ENCODE measurements at regions of chr1 and their contacts with region 1.

Region 1: DNA sequence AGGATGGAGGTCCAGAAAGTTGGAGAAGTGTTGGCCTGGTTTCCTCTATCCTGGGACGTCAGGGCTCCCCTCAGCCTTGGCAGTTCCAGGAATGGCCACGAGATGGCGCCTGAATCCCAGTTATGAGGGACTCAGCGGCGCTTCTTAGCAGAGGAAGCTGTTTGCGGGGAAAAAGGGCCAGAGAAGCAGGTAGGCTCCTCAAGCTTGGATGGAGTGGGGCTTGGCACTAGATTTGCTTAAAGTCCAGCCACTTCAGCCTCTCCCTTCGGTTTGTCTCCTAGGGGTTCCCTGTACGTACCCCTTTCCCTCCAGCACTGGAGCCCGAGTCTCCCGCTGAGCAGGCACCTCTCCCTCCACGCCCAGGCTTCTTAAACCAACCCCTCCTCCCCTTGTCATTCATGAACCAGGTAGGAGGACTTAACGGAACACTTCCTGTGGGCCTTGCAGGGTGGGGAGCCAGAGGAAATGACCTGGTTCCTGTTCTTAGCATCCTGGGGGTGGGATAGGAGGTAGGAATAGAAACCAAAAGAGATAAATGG is 32.0 kb upstream of the TENT5B start:
- DNase-seq: peak; percentile 77
- H3K4me3 ChIP-seq: no peak overlapping the region
- H3K27ac ChIP-seq: no peak overlapping the region
- H3K4me1 ChIP-seq: peaks cover 5% of the 10 kb centered on the region
- H3K27me3 ChIP-seq: no peaks in the 10 kb centered on the region
- CTCF ChIP-seq: peak; percentile 95 to 96
- POLR2A ChIP-seq: no peak

Region 2: GRCh38 chr1:26431979-26432695 is 612.5 kb before region 1 on chr1 and contains the start of gene DHDDS:
- CTCF ChIA-PET with region 1: no interaction called
- POLR2A ChIA-PET with region 1: no interaction called
- dilution Hi-C with region 1: no loop called
- intact Hi-C with region 1: no loop called
- DNase-seq: peak; percentile 99
- H3K4me3 ChIP-seq: peak within 1 kb of the TSS; percentile 52 to 92 (median 75)
- H3K27ac ChIP-seq: peak within 1 kb of the TSS; percentile 54
- H3K4me1 ChIP-seq: peaks cover 20% of the 10 kb centered on the region
- H3K27me3 ChIP-seq: peaks cover 1 to 3% of the 10 kb centered on the region in 2 experiments
- CTCF ChIP-seq: no peak
- POLR2A ChIP-seq: peak; percentile 83
- total RNA-seq, gene DHDDS: 60.3 and 70.7 TPM in 2 replicates

Region 3: GRCh38 chr1:26496861-26497260 is 547.8 kb before region 1 on chr1:
- CTCF ChIA-PET with region 1: no interaction called
- POLR2A ChIA-PET with region 1: no interaction called
- dilution Hi-C with region 1: no loop called
- intact Hi-C with region 1: no loop called
- DNase-seq: no peak
- H3K4me3 ChIP-seq: no peak overlapping the region
- H3K27ac ChIP-seq: no peak overlapping the region
- H3K4me1 ChIP-seq: peaks cover 12% of the 10 kb centered on the region
- H3K27me3 ChIP-seq: peaks cover 0 to 1% of the 10 kb centered on the region in 2 experiments
- CTCF ChIP-seq: no peak
- POLR2A ChIP-seq: no peak

Region 4: GRCh38 chr1:26999440-26999987 is 45.2 kb before region 1 on chr1:
- CTCF ChIA-PET with region 1: interaction called, 181 read pairs
- POLR2A ChIA-PET with region 1: no interaction called
- dilution Hi-C with region 1: no loop called
- intact Hi-C with region 1: loop called (anchors 1 kb)
- DNase-seq: peak; percentile 45
- H3K4me3 ChIP-seq: no peak overlapping the region
- H3K27ac ChIP-seq: peak overlapping the region; percentile 70
- H3K4me1 ChIP-seq: peaks cover 27% of the 10 kb centered on the region
- H3K27me3 ChIP-seq: no peaks in the 10 kb centered on the region
- CTCF ChIP-seq: no peak
- POLR2A ChIP-seq: no peak

Region 5: DNA sequence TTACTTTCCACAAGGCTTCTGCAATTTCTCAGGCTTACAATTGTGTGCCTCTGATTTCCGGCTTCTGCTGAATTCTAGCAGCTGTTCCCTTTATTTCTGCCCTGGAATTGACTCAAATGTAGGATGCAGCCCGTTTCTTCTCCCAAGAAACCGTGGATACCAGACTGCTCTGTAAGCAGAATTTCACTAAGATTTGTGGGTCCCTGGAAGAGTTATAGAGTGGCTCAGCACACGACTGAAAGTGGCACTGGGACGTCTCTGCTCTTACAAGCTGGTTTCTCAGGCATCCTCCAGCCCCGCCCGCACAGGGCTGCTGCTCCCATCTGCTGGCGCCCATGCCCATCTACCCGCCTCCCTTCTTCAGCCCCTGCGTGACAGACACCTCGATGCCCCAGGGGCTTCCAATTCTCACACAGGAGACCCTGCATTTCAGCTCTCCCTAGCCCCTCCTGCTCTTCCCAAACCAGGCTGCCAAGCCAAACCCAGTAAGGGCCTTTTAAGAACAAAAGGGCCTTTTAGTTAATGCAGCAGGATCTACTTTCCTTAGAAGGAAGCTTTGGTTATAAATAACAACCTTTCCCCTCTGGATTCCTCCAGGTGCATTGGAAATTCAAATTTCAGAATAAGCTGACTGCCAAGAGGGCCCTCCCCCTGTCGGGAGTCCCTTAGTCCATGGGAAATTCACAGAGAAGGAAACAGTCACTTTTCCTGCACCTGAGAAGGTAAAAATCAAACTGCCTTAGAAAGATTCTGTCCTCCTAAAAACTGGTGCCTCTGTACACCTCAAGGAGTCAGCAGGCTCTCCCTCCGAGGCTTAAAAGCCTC is 13.3 kb after region 1 on chr1:
- CTCF ChIA-PET with region 1: interaction called, 55 read pairs
- POLR2A ChIA-PET with region 1: no interaction called
- dilution Hi-C with region 1: no loop called
- intact Hi-C with region 1: no loop called
- DNase-seq: no peak
- H3K4me3 ChIP-seq: no peak overlapping the region
- H3K27ac ChIP-seq: no peak overlapping the region
- H3K4me1 ChIP-seq: no peaks in the 10 kb centered on the region
- H3K27me3 ChIP-seq: peaks cover 6 to 10% of the 10 kb centered on the region in 2 experiments
- CTCF ChIP-seq: no peak
- POLR2A ChIP-seq: no peak

Region 6: GRCh38 chr1:27087371-27088220 is 42.9 kb after region 1 on chr1:
- CTCF ChIA-PET with region 1: interaction called, 582 read pairs
- POLR2A ChIA-PET with region 1: no interaction called
- dilution Hi-C with region 1: no loop called
- intact Hi-C with region 1: no loop called
- DNase-seq: no peak
- H3K4me3 ChIP-seq: no peak overlapping the region
- H3K27ac ChIP-seq: no peak overlapping the region
- H3K4me1 ChIP-seq: no peaks in the 10 kb centered on the region
- H3K27me3 ChIP-seq: peaks cover 0 to 3% of the 10 kb centered on the region in 2 experiments
- CTCF ChIP-seq: no peak
- POLR2A ChIP-seq: no peak

Region 7: DNA sequence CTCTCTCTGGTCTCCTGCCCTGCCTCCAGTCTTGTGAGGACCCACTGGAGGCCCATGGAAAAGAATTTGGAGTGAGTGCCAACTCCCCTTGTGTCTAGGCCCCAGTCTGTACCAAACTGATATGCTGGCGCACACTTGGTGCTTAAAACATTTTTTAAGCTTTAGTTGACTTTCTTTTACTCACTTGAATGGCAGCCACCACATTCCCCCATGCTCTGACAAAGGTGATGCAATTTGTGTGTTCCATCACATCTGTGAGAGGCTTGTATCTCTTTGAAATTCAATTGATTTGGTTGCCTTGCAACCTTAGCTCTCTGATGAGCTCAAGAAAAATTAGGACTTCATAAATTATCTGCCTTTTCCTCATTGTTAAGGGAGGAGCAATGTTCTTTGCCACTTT is 159.3 kb after region 1 on chr1:
- CTCF ChIA-PET with region 1: interaction called, 5 read pairs
- POLR2A ChIA-PET with region 1: no interaction called
- dilution Hi-C with region 1: no loop called
- intact Hi-C with region 1: loop called (anchors 2 kb)
- DNase-seq: no peak
- H3K4me3 ChIP-seq: no peak overlapping the region
- H3K27ac ChIP-seq: no peak overlapping the region
- H3K4me1 ChIP-seq: no peaks in the 10 kb centered on the region
- H3K27me3 ChIP-seq: peaks cover 0 to 5% of the 10 kb centered on the region in 2 experiments
- CTCF ChIP-seq: no peak
- POLR2A ChIP-seq: no peak

Region 8: DNA sequence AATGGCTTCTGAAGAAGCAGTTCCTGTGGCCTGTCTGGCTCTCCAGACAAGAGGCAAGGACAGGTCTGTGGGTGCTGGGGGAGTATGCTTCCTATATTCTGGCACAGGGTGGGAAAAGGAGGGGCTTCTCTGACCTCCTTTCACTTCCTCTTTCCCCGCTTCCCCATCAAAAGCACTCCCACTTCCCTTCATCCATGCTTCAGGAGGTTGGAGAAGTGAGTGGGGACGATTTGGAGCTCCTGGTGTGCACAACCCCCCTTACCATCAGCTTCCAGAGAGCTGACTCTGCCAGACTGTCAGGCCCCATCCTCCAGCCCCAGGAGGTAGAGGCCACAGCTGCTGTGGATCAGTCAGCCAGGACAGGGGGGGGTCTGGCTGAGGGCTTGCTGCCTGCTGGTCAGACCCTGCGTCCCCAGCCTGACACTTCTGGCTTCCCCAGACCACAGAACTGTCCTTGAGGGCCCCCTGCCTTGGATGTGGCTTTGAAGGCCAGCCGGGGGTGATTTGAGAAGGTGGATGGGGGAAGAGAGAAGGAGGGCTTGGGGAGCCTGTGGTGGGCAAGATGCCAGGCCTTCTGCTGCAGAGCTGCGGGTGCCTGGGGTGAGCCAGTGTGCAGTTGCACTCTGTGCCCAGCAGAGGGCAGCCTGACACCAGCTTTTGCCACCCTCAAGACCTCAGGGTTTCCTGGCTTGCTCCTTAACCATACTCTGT is 255.8 kb after region 1 on chr1:
- CTCF ChIA-PET with region 1: interaction called, 17 read pairs
- POLR2A ChIA-PET with region 1: no interaction called
- dilution Hi-C with region 1: no loop called
- intact Hi-C with region 1: no loop called
- DNase-seq: peak; percentile 89
- H3K4me3 ChIP-seq: no peak overlapping the region
- H3K27ac ChIP-seq: no peak overlapping the region
- H3K4me1 ChIP-seq: no peaks in the 10 kb centered on the region
- H3K27me3 ChIP-seq: no peaks in the 10 kb centered on the region
- CTCF ChIP-seq: peak; percentile 95 to 98
- POLR2A ChIP-seq: no peak

Measured in endothelial cell of umbilical vein (primary cell).